ENCODE measurements at regions of chr6 and their contacts with region 1.

Region 1: GRCh38 chr6:18387061-18387721 is at the start of gene RNF144B:
- DNase-seq: peak; percentile 64
- ATAC-seq: peak; percentile 94
- H3K4me3 Mint-ChIP-seq: peak within 1 kb of the TSS; percentile 95
- H3K27ac Mint-ChIP-seq: peak within 1 kb of the TSS; percentile 80
- H3K4me1 Mint-ChIP-seq: peaks cover 48% of the 10 kb centered on the region
- H3K27me3 Mint-ChIP-seq: no peaks in the 10 kb centered on the region
- CTCF ChIP-seq: no peak
- total RNA-seq, gene RNF144B: 12.6 and 13.5 TPM in 2 replicates

Region 2: GRCh38 chr6:17706580-17707370 is 680.4 kb before region 1 on chr6 and contains the start of gene NUP153:
- CTCF ChIA-PET with region 1: no interaction called
- POLR2A ChIA-PET with region 1: interaction called, 3 read pairs
- intact Hi-C with region 1: loop called (anchors 1 kb)
- DNase-seq: peak; percentile 100
- ATAC-seq: peak; percentile 67
- H3K4me3 Mint-ChIP-seq: peak within 1 kb of the TSS; percentile 89
- H3K27ac Mint-ChIP-seq: peak within 1 kb of the TSS; percentile 95
- H3K4me1 Mint-ChIP-seq: peaks cover 44% of the 10 kb centered on the region
- H3K27me3 Mint-ChIP-seq: no peaks in the 10 kb centered on the region
- CTCF ChIP-seq: no peak
- total RNA-seq, gene NUP153: 59.2 and 63.8 TPM in 2 replicates

Region 3: DNA sequence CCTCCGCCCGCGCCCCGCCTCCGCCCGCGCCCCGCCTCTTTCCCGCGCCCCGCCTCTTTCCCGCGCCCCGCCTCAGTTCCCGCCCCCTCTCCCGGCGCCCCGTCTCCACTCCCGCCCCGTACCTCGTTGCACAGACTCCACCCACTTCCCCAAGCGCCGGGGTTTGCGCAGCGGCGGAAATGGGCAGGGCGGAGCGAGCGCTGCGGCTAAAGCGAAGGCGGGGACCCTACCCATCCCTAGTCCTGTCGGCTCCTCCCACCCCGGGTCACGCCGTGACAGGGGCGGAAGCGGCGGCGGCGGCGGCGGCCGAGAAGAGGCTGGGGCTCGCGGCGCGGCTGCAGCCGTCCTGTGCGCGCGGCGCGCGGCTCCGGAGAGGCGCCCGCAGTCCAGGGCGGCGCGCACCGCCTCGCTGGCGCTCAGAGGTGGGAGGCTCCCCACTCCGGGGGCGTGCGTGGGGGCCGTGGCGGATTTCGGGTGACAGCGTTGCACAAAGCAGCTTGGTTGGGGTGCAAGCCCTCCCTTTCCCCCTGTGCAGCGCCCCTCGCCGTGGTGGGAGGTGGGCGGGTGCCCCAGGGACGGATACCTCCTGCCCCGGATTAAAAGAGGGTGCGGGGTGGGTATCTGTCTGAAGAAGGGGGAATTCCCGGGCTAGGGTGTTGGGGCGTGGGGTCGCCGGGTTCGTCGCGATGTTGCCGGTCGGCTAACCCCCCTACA is 231.9 kb before region 1 on chr6 and contains the start of gene KDM1B:
- CTCF ChIA-PET with region 1: no interaction called
- POLR2A ChIA-PET with region 1: no interaction called
- intact Hi-C with region 1: loop called (anchors 5 kb)
- DNase-seq: peak; percentile 96
- ATAC-seq: peak; percentile 91
- H3K4me3 Mint-ChIP-seq: peak within 1 kb of the TSS; percentile 97
- H3K27ac Mint-ChIP-seq: peak within 1 kb of the TSS; percentile 93
- H3K4me1 Mint-ChIP-seq: peaks cover 28% of the 10 kb centered on the region
- H3K27me3 Mint-ChIP-seq: no peaks in the 10 kb centered on the region
- CTCF ChIP-seq: no peak
- total RNA-seq, gene KDM1B: 19.6 and 21.0 TPM in 2 replicates

Region 4: DNA sequence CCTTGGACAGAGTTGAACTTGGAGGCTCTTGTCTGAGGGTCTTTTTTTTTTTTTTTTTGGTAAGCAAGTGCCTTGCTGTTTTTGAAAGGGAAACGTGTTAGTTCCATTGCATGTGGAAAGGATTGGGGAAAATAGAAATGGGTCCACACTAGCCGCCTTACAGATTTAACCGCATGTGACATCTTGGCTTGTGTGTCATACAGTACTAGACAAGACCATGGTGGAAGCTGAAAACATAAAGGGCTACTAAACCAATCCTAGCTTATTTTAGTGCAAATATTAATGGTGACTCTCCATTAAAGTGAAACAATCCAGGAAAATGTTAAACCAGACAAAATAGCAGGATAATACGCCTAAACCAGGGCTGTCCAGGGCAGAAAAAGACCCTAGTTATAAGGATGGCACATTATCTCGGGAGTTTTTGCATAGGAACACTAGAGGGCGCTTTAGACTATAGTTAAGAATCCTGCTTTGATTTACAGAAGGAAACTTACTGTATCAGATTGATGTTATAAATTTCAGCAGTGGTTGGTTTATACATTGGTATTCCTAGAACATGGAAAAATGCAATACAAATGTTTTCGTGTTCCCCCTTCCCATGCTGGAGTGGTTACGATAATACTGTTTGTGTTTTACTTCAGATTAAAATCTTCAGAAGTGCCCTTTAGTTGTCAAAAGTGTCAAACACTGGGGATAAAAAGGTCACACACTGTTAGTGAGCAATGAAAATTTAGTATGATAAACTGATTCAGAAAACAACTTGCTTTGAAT is 63.1 kb before region 1 on chr6:
- CTCF ChIA-PET with region 1: interaction called, 4 read pairs
- POLR2A ChIA-PET with region 1: interaction called, 49 read pairs
- intact Hi-C with region 1: loop called (anchors 2 kb)
- DNase-seq: no peak
- ATAC-seq: peak; percentile 62
- H3K4me3 Mint-ChIP-seq: no peak overlapping the region
- H3K27ac Mint-ChIP-seq: no peak overlapping the region
- H3K4me1 Mint-ChIP-seq: peaks cover 34% of the 10 kb centered on the region
- H3K27me3 Mint-ChIP-seq: no peaks in the 10 kb centered on the region
- CTCF ChIP-seq: peak; percentile 44

Region 5: GRCh38 chr6:18400831-18401446 is 13.7 kb after region 1 on chr6:
- CTCF ChIA-PET with region 1: interaction called, 5 read pairs
- POLR2A ChIA-PET with region 1: interaction called, 30 read pairs
- intact Hi-C with region 1: loop called (anchors 1 kb)
- DNase-seq: no peak
- ATAC-seq: peak; percentile 90
- H3K4me3 Mint-ChIP-seq: peak overlapping the region; percentile 59
- H3K27ac Mint-ChIP-seq: peak overlapping the region; percentile 93
- H3K4me1 Mint-ChIP-seq: peaks cover 40% of the 10 kb centered on the region
- H3K27me3 Mint-ChIP-seq: no peaks in the 10 kb centered on the region
- CTCF ChIP-seq: no peak

Region 6: GRCh38 chr6:18444056-18444575 is 56.9 kb after region 1 on chr6:
- CTCF ChIA-PET with region 1: no interaction called
- POLR2A ChIA-PET with region 1: no interaction called
- intact Hi-C with region 1: loop called (anchors 5 kb)
- DNase-seq: no peak
- ATAC-seq: no peak
- H3K4me3 Mint-ChIP-seq: no peak overlapping the region
- H3K27ac Mint-ChIP-seq: no peak overlapping the region
- H3K4me1 Mint-ChIP-seq: peaks cover 16% of the 10 kb centered on the region
- H3K27me3 Mint-ChIP-seq: no peaks in the 10 kb centered on the region
- CTCF ChIP-seq: no peak

Region 7: DNA sequence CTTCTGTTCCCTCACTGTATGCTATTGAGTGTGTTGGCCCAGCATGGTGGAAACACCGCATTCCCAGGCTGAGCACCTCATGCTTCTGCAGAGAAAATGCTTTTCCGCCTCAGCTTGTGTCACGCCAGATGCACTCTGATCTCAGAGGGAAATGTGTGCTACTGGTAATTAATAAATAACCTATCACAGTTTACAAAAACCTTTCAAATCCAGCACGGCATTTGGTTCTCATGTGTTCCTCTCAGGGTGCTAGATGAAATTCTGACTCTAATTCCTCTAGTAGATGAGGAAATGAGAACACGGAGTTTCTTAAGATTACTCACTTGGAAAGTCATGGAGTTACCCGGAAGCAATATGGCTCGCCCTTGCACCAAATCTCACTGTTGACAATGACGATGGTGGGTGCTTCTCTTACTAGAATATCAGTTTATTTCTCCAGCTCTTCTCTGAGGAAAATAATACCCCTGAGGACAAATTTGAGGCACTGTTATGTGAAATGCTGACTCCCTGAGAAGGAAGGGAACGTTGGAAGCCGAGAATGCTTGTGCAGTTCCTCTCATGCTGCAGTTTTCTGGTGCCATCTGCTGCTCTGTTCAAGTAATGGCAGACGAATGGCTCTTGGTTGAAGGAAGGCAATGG is 116.5 kb after region 1 on chr6:
- CTCF ChIA-PET with region 1: interaction called, 13 read pairs
- POLR2A ChIA-PET with region 1: interaction called, 10 read pairs
- intact Hi-C with region 1: loop called (anchors 1 kb)
- DNase-seq: no peak
- ATAC-seq: peak; percentile 88
- H3K4me3 Mint-ChIP-seq: peak overlapping the region; percentile 73
- H3K27ac Mint-ChIP-seq: no peak overlapping the region
- H3K4me1 Mint-ChIP-seq: peaks cover 14% of the 10 kb centered on the region
- H3K27me3 Mint-ChIP-seq: no peaks in the 10 kb centered on the region
- CTCF ChIP-seq: peak; percentile 79

Measured in activated B cell treated with CpG ODN at 0.5 μM for 24 hours (primary cell).